BJ (cell line): ENCODE measurements at regions of chr11 and their contacts with region 1.

Region 1: DNA sequence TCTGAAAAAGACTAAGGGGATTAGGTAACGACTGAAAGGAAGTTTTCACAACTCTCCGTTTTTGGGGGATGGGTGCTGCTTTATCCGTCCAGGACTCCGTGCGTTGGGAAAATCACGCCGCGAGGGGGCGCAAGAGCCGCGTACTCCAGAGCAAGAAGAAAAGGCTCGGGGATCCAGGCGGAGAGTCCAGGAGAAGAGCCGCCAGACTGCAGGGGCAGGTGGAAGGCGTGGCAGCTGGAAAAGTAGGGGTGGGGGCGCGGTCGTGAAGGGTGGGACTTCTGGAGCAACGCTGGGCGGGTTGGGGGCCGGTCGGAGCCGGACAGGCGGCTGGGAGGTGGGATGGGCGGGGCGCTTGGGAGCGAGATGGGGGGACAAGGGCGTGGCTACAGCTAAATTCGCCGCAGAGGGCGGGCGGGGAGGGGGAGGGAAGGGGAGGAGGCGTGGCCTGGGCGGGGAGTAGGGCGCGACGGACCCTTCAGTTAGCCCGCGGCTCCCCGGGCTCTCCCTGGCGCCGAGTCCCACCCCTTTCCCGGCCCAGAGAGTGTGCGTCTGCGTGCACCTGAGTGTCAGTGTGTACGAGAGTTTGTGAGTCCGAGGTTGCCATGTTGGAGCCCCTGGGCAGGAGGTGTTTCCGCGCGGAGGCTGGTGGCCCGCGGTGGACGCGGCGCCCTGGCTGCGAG is 613 bp upstream of the ARHGEF17 start:
- DNase-seq: peak; percentile 90
- H3K4me3 ChIP-seq: peak overlapping the region; percentile 80
- H3K27me3 ChIP-seq: no peaks in the 10 kb centered on the region
- CTCF ChIP-seq: peak; percentile 89

Region 2: GRCh38 chr11:72722050-72722748 is 585.3 kb before region 1 on chr11:
- CTCF ChIA-PET with region 1: no interaction called
- POLR2A ChIA-PET with region 1: interaction called, 12 read pairs
- DNase-seq: peak; percentile 46
- H3K4me3 ChIP-seq: peak overlapping the region; percentile 50
- H3K27me3 ChIP-seq: no peaks in the 10 kb centered on the region
- CTCF ChIP-seq: no peak

Region 3: GRCh38 chr11:73288873-73289707 is 18.4 kb before region 1 on chr11:
- CTCF ChIA-PET with region 1: interaction called, 53 read pairs
- POLR2A ChIA-PET with region 1: no interaction called
- DNase-seq: no peak
- H3K4me3 ChIP-seq: no peak overlapping the region
- H3K27me3 ChIP-seq: no peaks in the 10 kb centered on the region
- CTCF ChIP-seq: peak; percentile 96

Region 4: DNA sequence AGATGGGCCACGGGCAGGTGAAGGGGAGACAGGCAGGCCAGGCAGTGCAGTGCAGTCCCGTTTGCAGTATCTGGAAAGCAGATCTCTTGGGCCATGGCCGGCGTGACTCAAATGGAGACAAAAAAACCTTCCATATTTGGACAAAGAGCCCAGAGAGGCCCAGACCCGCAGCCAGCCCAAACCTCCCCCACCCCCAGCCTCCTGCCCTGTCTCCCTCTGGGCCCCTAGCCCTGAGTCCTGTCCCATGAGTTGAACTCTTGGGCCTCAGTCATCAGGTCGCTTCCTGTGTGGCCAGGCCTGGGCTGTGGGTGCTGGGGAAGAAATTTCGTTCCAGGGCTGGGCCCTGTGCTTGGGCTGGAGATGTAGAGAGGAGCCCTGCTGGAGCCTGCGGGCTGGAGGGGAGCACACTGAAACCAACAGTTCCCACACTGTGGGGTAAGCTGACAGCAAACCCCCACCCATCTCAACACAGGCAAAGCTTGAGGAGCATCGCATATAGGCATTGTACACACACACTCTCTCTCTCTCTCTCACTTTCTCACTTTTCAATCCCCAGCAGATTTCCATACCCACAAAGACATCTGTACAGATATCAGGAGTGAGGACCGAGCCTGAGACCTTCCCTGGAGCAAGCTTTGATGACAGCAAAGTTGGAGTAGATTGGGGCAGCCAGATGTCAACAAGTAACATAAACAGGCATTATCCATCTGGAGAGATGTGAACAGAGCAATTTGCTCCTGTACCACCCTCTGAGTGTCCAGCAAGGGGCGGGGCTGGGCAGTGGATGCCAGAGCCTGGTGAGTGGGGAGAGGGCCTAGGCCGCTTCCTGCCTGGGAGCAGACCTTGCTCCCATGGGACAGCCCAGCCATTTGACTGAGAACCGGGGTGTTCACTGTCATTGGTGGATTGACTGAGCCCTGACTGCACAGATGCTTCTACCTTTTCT is 17.8 kb after region 1 on chr11:
- CTCF ChIA-PET with region 1: interaction called, 79 read pairs
- POLR2A ChIA-PET with region 1: interaction called, 11 read pairs
- DNase-seq: no peak
- H3K4me3 ChIP-seq: no peak overlapping the region
- H3K27me3 ChIP-seq: no peaks in the 10 kb centered on the region
- CTCF ChIP-seq: no peak

Region 5: DNA sequence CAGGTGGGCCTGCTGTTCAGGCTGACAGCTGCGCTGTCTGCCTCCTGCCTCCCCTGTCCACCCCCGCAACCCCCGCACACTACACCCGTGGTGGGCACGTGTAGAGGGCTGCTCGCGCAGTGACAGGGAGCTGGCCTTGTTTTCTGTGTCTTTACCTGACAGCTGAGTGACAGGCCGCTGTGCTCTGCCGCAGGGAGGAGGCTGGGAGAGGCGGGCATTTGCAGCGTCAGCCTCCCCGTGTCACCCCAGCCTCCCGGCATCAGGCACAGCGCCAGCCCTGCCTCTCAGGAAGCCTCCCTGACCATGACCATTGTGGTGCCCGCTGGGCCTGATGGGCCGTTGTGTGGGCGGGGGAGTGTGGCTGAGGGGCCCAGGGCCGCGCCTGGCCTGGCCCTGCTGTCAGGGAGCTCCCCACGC is 36.7 kb after region 1 on chr11:
- CTCF ChIA-PET with region 1: interaction called, 259 read pairs
- POLR2A ChIA-PET with region 1: no interaction called
- DNase-seq: no peak
- H3K4me3 ChIP-seq: no peak overlapping the region
- H3K27me3 ChIP-seq: no peaks in the 10 kb centered on the region
- CTCF ChIP-seq: no peak

Region 6: GRCh38 chr11:73360336-73361013 is 53.0 kb after region 1 on chr11:
- CTCF ChIA-PET with region 1: interaction called, 20 read pairs
- POLR2A ChIA-PET with region 1: no interaction called
- DNase-seq: no peak
- H3K4me3 ChIP-seq: no peak overlapping the region
- H3K27me3 ChIP-seq: no peaks in the 10 kb centered on the region
- CTCF ChIP-seq: peak; percentile 45

Region 7: GRCh38 chr11:73393479-73394380 is 86.3 kb after region 1 on chr11:
- CTCF ChIA-PET with region 1: interaction called, 30 read pairs
- POLR2A ChIA-PET with region 1: no interaction called
- DNase-seq: no peak
- H3K4me3 ChIP-seq: no peak overlapping the region
- H3K27me3 ChIP-seq: no peaks in the 10 kb centered on the region
- CTCF ChIP-seq: peak; percentile 88

Region 8: DNA sequence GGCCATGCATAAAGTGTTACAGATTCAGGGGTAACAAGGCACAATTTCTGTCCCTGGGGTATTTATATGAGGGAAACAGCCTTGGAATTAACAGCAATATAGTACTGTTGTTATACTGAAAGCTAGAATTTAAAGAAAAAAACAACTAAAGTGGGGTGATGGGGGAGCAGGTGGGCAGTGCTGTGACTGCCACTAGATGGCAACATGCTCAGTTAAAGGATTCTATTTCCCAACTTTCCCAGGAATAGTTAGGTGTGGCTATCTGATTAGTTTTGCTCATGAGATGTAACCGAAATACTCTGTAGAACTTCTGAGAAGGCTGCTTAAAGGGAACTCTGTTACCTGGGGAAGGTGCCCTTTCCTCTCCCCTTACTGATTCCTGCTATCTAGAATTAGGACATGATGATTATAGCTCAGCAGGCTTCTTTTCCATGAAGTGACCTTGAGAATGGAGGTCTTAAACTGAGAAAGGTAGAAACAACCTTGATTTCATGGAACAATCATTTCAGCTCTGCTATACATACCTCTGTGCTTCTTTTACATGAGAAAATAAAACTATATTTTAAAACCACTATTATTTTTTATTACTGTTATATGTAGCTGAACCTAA is 171.4 kb after region 1 on chr11:
- CTCF ChIA-PET with region 1: no interaction called
- POLR2A ChIA-PET with region 1: no interaction called
- DNase-seq: no peak
- H3K4me3 ChIP-seq: no peak overlapping the region
- H3K27me3 ChIP-seq: no peaks in the 10 kb centered on the region
- CTCF ChIP-seq: peak; percentile 92